PC-9 (cell line): ENCODE measurements at regions of chrX and their contacts with region 1.

Region 1: GRCh38 chrX:71181910-71182799 is 37.5 kb downstream of the NLGN3 start:
- DNase-seq: peak; percentile 83 to 92
- H3K4me3 ChIP-seq: peak overlapping the region; percentile 78; the same call in 1 of the 2 replicates
- H3K27ac ChIP-seq: peak overlapping the region; percentile 71
- H3K4me1 ChIP-seq: no peaks in the 10 kb centered on the region
- H3K27me3 ChIP-seq: no peaks in the 10 kb centered on the region
- CTCF ChIP-seq: no peak

Region 2: GRCh38 chrX:70769659-70770232 is 412.4 kb before region 1 on chrX:
- CTCF ChIA-PET with region 1: no interaction called
- POLR2A ChIA-PET with region 1: no interaction called
- intact Hi-C with region 1: loop called (anchors 10 kb)
- DNase-seq: no peak
- H3K4me3 ChIP-seq: no peak overlapping the region
- H3K27ac ChIP-seq: no peak overlapping the region
- H3K4me1 ChIP-seq: no peaks in the 10 kb centered on the region
- H3K27me3 ChIP-seq: no peaks in the 10 kb centered on the region; the same call in 1 of the 2 replicates
- CTCF ChIP-seq: peak; percentile 70

Region 3: GRCh38 chrX:70970482-70970995 is 211.6 kb before region 1 on chrX:
- CTCF ChIA-PET with region 1: no interaction called
- POLR2A ChIA-PET with region 1: no interaction called
- intact Hi-C with region 1: loop called (anchors 1 kb)
- DNase-seq: no peak
- H3K4me3 ChIP-seq: no peak overlapping the region
- H3K27ac ChIP-seq: no peak overlapping the region
- H3K4me1 ChIP-seq: no peaks in the 10 kb centered on the region
- H3K27me3 ChIP-seq: peaks cover 19% of the 10 kb centered on the region; the same call in 1 of the 2 replicates
- CTCF ChIP-seq: peak; percentile 61

Region 4: GRCh38 chrX:70988425-70988824 is 193.7 kb before region 1 on chrX:
- CTCF ChIA-PET with region 1: no interaction called
- POLR2A ChIA-PET with region 1: no interaction called
- intact Hi-C with region 1: no loop called
- DNase-seq: no peak
- H3K4me3 ChIP-seq: no peak overlapping the region
- H3K27ac ChIP-seq: no peak overlapping the region
- H3K4me1 ChIP-seq: no peaks in the 10 kb centered on the region
- H3K27me3 ChIP-seq: no peaks in the 10 kb centered on the region
- CTCF ChIP-seq: no peak

Region 5: GRCh38 chrX:70998411-70999027 is 183.6 kb before region 1 on chrX:
- CTCF ChIA-PET with region 1: no interaction called
- POLR2A ChIA-PET with region 1: no interaction called
- intact Hi-C with region 1: loop called (anchors 1 kb)
- DNase-seq: peak in 1 of 2 experiments; percentile 3
- H3K4me3 ChIP-seq: no peak overlapping the region
- H3K27ac ChIP-seq: no peak overlapping the region
- H3K4me1 ChIP-seq: no peaks in the 10 kb centered on the region
- H3K27me3 ChIP-seq: no peaks in the 10 kb centered on the region
- CTCF ChIP-seq: peak; percentile 42; the same call in 1 of the 2 replicates

Region 6: DNA sequence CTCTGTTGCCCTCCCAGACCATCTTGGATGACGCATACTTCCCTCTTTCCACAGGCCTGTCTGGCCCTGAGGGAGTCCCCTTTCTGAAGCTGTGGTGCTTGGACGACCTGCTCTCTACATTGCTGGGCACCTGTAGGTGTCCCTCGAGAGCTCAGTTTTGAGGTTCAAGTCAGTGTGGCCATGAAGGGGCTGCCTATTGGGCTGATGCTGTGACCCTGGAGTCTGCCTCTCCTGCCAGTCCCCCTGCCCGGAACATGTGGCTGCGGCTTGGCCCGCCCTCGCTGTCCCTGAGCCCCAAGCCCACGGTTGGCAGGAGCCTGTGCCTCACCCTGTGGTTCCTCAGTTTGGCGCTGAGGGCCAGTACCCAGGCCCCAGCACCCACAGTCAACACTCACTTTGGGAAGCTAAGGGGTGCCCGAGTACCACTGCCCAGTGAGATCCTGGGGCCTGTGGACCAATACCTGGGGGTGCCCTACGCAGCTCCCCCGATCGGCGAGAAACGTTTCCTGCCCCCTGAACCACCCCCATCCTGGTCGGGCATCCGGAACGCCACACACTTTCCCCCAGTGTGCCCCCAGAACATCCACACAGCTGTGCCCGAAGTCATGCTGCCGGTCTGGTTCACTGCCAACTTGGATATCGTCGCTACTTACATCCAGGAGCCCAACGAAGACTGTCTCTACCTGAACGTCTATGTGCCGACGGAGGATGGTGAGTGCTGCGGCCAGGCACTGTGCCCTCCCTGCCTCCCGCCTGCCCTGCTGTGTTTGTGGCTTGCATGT is 34.5 kb before region 1 on chrX:
- CTCF ChIA-PET with region 1: no interaction called
- POLR2A ChIA-PET with region 1: no interaction called
- intact Hi-C with region 1: no loop called
- DNase-seq: no peak
- H3K4me3 ChIP-seq: no peak overlapping the region
- H3K27ac ChIP-seq: no peak overlapping the region
- H3K4me1 ChIP-seq: no peaks in the 10 kb centered on the region
- H3K27me3 ChIP-seq: no peaks in the 10 kb centered on the region
- CTCF ChIP-seq: no peak

Region 7: DNA sequence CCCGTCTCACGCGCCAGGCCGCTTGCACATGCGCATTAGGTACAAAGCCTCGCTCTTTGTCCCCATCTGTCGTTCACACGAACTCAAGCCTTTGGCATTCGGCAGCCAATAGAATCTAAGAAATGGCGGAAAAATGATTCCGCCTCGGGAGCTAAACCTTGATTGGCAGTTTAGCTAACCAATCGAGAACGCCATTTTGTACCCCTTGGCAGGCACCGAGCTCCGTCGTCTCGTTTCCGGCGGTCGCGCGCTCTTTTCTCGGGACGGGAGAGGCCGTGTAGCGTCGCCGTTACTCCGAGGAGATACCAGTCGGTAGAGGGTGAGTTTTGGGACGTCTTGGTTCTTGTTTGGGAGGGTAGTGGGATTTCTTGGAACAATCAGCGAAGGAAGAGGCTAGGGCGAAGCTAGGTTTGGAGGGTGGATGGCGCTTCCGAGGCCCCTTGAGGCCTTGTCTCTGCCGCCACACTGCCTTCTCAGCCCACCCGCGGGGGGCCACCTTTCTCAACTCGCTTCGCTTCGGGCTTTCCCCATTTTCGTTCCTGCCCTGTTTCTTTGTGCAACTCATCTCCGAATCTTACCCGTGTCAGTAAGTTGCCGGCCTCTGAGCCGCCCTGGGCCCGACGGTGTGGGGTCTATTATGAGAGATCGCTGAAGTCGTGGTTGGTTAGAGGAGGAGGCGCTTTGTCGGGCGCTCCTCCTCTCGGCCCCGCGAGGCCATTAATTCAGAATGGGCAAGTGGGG is 101.4 kb after region 1 on chrX and contains the start of gene NONO:
- CTCF ChIA-PET with region 1: no interaction called
- POLR2A ChIA-PET with region 1: no interaction called
- intact Hi-C with region 1: loop called (anchors 2 kb)
- DNase-seq: peak; percentile 83 to 97
- H3K4me3 ChIP-seq: peak within 1 kb of the TSS; percentile 77
- H3K27ac ChIP-seq: peak within 1 kb of the TSS; percentile 79
- H3K4me1 ChIP-seq: peaks cover 17% of the 10 kb centered on the region
- H3K27me3 ChIP-seq: no peaks in the 10 kb centered on the region
- CTCF ChIP-seq: no peak
- total RNA-seq, gene NONO: 499 and 551 TPM in 2 replicates